ENCODE measurements at regions of chr6 and their contacts with region 1.

Region 1: GRCh38 chr6:138109042-138109997 is 2.1 kb upstream of the PERP start:
- DNase-seq: peak; percentile 61 to 69
- H3K4me3 ChIP-seq: no peak overlapping the region
- H3K27ac ChIP-seq: peak overlapping the region in 1 of 2 donors; percentile 31
- H3K4me1 ChIP-seq: no peaks in the 10 kb centered on the region
- H3K27me3 ChIP-seq: no peaks in the 10 kb centered on the region
- CTCF ChIP-seq: peak; percentile 86 to 98 (median 92)
- POLR2A ChIP-seq: no peak

Region 2: DNA sequence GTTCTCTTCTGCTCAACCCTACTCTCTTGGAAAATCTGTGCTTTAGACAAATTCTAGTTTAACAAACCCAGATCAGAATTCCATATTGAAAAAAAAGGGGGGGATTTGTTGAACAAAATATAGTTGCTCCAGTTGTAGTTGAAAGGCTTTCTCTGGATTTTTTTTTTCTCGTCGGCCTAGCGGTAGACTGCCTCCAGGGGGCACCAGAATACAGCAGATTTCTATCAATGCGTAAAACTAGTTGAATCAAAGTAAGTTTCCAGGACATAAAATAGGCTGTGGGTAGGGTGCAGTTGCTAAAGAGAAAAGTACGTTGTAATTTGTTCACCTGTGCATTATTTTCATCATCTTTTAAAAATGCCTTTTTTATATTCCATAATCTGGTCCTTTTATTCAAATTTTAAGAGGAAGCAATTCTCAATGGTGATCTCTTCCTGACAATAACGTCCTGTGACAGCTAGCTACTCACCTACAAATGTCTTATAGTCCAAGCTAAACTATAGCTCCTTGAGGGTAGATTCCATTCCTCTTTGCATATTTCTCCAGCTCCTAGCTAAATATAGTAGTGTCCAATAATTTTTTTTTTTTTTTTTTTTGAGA is 107.5 kb before region 1 on chr6:
- intact Hi-C with region 1: loop called (anchors 2 kb)
- DNase-seq: peak; percentile 46 to 47
- H3K4me3 ChIP-seq: no peak overlapping the region
- H3K27ac ChIP-seq: no peak overlapping the region
- H3K4me1 ChIP-seq: no peaks in the 10 kb centered on the region
- H3K27me3 ChIP-seq: no peaks in the 10 kb centered on the region
- CTCF ChIP-seq: peak; percentile 70 to 80 (median 76)
- POLR2A ChIP-seq: no peak

Measured in uterus (tissue), 4 donors.